Astrocyte of the cerebellum (primary cell): ENCODE measurements at regions of chr11 and their contacts with region 1.

Region 1: DNA sequence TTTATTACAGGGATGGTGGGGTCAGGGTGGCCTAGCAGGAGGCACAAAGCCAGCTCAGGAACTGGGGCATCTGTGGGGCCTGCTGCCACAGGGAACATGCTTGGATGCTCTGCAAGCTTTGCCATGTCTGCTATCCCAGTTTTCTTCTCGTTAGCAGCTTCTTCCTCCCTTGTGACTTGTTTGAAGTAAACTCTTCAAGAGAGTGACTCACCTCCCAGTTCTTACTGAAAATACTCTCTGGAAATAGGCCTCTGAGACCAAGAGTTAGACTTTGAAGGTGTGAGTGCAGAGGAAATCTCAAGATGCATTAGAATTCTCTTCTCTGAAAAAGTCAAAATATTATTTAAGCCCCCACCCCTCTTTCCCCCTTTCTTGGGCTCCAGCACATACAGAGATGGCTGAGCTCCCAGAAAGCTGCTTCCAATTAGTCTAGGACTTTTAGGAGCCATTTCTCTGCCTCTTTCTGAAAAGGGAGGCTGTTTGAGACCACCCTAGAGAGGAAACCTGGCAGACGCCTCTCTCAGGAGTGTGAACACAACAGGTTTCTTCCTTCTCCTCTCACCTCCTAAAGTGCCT is 15.1 kb downstream of the CWC15 start:
- DNase-seq: no peak
- H3K4me3 ChIP-seq: no peak overlapping the region
- CTCF ChIP-seq: no peak

Region 2: GRCh38 chr11:94629741-94630140 is 328.5 kb before region 1 on chr11:
- in situ Hi-C with region 1: loop called (anchors 5 kb)
- DNase-seq: no peak
- H3K4me3 ChIP-seq: no peak overlapping the region
- CTCF ChIP-seq: no peak